ENCODE measurements at regions of chr6 and their contacts with region 1.

Region 1: DNA sequence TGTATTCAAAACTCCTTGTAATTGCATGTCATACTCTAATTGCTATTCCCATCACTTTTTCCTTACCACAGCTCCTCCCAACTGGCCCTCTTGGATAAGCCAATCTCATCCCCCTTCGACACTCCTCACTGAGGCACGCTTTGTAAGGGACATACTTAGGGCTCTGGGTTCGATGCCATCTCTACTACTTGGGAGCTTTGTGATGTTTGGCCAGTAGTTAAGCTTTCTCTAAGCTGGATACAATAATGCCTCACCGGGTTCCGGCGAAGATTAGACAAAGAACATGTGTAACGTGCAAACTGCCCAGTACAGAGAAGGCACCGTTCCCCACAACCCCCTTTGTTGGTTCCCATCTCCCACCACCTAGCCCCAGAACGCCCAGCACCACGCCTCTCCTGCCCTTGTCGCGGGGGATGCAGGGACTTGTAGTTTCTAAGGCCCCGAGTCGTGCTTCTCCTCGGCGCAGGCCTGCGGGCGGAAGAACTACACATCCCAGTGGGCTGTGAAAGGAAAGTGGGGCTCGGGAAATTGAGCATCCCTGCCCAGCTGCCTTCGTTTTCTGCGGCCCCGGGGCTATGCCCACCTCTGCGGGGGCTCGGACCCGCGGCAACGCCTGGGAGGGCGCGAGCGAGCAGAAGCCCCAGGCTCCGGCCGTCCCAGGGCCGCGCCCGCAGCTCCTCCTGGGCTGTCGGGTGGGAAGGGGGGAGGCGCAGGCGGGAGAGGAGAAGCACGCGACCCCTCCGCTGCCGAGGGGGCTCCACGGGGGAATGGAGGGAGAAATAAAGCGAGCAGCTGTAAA is 1.1 kb upstream of the ZDHHC14 start:
- DNase-seq: peak; percentile 90
- ATAC-seq: peak; percentile 74
- H3K4me3 ChIP-seq: peak overlapping the region; percentile 42 to 99 (median 93)
- H3K4me3 Mint-ChIP-seq: peak overlapping the region; percentile 80
- H3K27ac ChIP-seq: peak overlapping the region; percentile 55 to 80
- H3K27ac Mint-ChIP-seq: peak overlapping the region; percentile 69
- H3K4me1 ChIP-seq: peaks cover 24 to 32% of the 10 kb centered on the region in 2 donors
- H3K4me1 Mint-ChIP-seq: peaks cover 26% of the 10 kb centered on the region
- H3K27me3 ChIP-seq: peaks cover 0 to 12% (median 5%) of the 10 kb centered on the region in 4 experiments
- H3K27me3 Mint-ChIP-seq: peaks cover 8% of the 10 kb centered on the region
- CTCF ChIP-seq: no peak

Region 2: GRCh38 chr6:157368359-157369049 is 11.4 kb before region 1 on chr6:
- CTCF ChIA-PET with region 1: interaction called, 7 read pairs
- POLR2A ChIA-PET with region 1: interaction called, 8 read pairs
- intact Hi-C with region 1: loop called (anchors 1 kb)
- DNase-seq: peak; percentile 19
- ATAC-seq: peak; percentile 29
- H3K4me3 ChIP-seq: no peak overlapping the region
- H3K4me3 Mint-ChIP-seq: peak overlapping the region; percentile 26
- H3K27ac ChIP-seq: no peak overlapping the region
- H3K27ac Mint-ChIP-seq: peak overlapping the region; percentile 54
- H3K4me1 ChIP-seq: peaks cover 22 to 23% of the 10 kb centered on the region in 2 donors
- H3K4me1 Mint-ChIP-seq: peaks cover 18% of the 10 kb centered on the region
- H3K27me3 ChIP-seq: peaks cover 2 to 50% (median 41%) of the 10 kb centered on the region in 4 experiments
- H3K27me3 Mint-ChIP-seq: peaks cover 52% of the 10 kb centered on the region
- CTCF ChIP-seq: no peak

Region 3: GRCh38 chr6:157597446-157598312 is 217.8 kb after region 1 on chr6:
- CTCF ChIA-PET with region 1: interaction called, 3 read pairs
- POLR2A ChIA-PET with region 1: no interaction called
- intact Hi-C with region 1: loop called (anchors 5 kb)
- DNase-seq: peak; percentile 53
- ATAC-seq: peak; percentile 69
- H3K4me3 ChIP-seq: no peak overlapping the region
- H3K4me3 Mint-ChIP-seq: peak overlapping the region; percentile 7
- H3K27ac ChIP-seq: no peak overlapping the region
- H3K27ac Mint-ChIP-seq: peak overlapping the region; percentile 81
- H3K4me1 ChIP-seq: peaks cover 31 to 52% of the 10 kb centered on the region in 2 donors
- H3K4me1 Mint-ChIP-seq: peaks cover 50% of the 10 kb centered on the region
- H3K27me3 ChIP-seq: no peaks in the 10 kb centered on the region
- H3K27me3 Mint-ChIP-seq: no peaks in the 10 kb centered on the region
- CTCF ChIP-seq: peak; percentile 48